ENCODE measurements at regions of chr12 and their contacts with region 1.

Region 1: DNA sequence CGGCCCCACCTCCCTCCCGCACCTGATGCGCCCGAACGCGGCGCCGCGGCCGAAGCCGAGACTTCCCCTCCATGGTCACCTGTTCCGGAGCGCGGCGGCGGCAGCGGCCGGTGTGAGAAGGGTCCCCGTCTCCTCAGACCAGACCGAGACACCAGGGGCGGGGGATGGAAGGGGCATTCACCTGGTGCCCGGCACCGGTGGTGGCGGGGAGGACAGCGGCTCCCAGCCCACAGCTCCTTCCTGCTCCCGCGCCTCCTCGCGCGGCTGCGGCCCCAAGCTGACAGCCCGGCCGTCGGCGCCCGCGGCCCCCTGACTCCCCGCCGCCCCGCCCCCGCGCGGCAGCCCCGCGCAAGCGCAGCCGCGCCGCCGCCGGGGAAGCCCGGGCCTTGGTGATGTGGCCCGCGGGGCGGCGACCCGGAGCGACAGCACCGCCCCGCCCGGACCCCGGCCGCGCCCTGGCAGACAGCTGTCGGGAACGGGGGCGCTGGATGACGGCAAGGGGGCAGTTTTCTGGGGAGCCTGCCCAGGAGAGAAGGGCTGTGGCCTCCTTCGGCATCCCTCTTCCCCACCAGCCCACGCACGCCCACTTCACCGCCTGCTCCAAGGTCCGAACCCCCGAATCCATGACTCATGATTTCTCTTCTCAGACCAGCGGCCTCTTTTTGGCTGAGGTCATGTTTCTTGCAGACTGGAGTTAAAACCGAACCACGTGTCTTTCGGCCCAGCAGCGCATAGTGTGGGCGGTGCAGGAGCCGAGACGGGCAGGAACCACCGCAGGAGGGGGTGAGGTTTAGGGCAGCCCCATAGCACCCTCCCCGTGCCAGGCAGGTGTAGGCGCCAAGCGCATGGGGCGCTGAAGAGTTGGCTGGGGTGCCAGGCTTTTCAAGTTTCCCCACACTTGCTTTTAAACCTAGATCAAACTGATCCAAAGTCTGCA is at the start of gene SLC41A2:
- DNase-seq: peak; percentile 91
- ATAC-seq: peak; percentile 84
- H3K4me3 ChIP-seq: peak within 1 kb of the TSS; percentile 57 to 80 (median 75)
- H3K4me3 Mint-ChIP-seq: peak within 1 kb of the TSS; percentile 95
- H3K27ac ChIP-seq: peak within 1 kb of the TSS; percentile 79 to 80
- H3K27ac Mint-ChIP-seq: peak within 1 kb of the TSS; percentile 93
- H3K4me1 ChIP-seq: peaks cover 13 to 16% of the 10 kb centered on the region in 2 donors
- H3K4me1 Mint-ChIP-seq: peaks cover 23% of the 10 kb centered on the region
- H3K27me3 ChIP-seq: peaks cover 0 to 2% (median 0%) of the 10 kb centered on the region in 4 experiments
- H3K27me3 Mint-ChIP-seq: peaks cover 6% of the 10 kb centered on the region
- CTCF ChIP-seq: peak; percentile 48
- total RNA-seq, gene SLC41A2: 13.0 TPM in 2 replicates

Region 2: DNA sequence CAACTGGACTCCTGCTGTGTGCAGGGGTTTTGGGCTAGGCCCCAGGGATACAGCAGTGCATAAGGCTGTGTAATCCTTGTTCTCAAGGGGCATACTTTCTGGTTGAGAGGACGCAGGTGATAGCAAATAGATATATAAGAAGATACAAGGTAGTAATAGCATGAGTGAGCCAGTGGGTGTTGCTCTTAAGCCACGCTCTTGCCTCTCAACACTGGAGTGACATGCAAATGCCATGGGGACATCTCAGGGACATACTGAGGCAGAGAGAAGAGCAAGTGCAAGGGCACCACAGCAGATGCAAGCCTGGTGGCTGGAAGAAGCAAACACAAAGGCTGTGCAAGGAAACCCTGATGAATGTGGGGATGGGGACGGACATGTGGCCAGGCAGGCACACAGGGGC is 278.2 kb before region 1 on chr12:
- CTCF ChIA-PET with region 1: interaction called, 5 read pairs
- POLR2A ChIA-PET with region 1: no interaction called
- intact Hi-C with region 1: loop called (anchors 10 kb)
- DNase-seq: peak; percentile 57
- ATAC-seq: peak; percentile 64
- H3K4me3 ChIP-seq: no peak overlapping the region
- H3K4me3 Mint-ChIP-seq: no peak overlapping the region
- H3K27ac ChIP-seq: peak overlapping the region in 1 of 2 donors; percentile 4
- H3K27ac Mint-ChIP-seq: peak overlapping the region; percentile 79
- H3K4me1 ChIP-seq: peaks cover 46 to 55% of the 10 kb centered on the region in 2 donors
- H3K4me1 Mint-ChIP-seq: peaks cover 79% of the 10 kb centered on the region
- H3K27me3 ChIP-seq: no peaks in the 10 kb centered on the region
- H3K27me3 Mint-ChIP-seq: no peaks in the 10 kb centered on the region
- CTCF ChIP-seq: peak; percentile 15

Region 3: DNA sequence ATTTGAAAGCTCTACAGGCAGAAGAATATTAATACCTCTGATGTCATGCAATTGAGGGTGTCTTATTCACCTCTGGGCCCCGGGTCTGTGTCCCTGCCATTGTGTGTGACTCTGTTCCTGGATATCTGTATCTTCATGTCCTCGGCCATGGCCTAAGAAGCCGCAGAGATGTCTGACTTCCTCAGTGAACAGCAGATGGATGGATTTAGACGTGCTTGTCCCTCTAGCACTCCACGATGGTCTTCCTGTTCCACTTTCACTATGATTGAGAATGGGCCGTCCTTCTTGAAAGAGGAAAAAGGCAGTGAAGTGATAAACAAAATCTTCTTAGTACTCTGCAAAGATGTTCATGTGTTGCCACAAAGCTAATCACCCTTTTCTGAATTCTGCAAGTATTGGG is 217.6 kb before region 1 on chr12:
- CTCF ChIA-PET with region 1: no interaction called
- POLR2A ChIA-PET with region 1: no interaction called
- intact Hi-C with region 1: loop called (anchors 1 kb)
- DNase-seq: peak; percentile 83
- ATAC-seq: peak; percentile 87
- H3K4me3 ChIP-seq: peak overlapping the region in 3 of 5 experiments; percentile 22 to 34 (median 33)
- H3K4me3 Mint-ChIP-seq: peak overlapping the region; percentile 74
- H3K27ac ChIP-seq: peak overlapping the region; percentile 66 to 83
- H3K27ac Mint-ChIP-seq: peak overlapping the region; percentile 93
- H3K4me1 ChIP-seq: peaks cover 77 to 88% of the 10 kb centered on the region in 2 donors
- H3K4me1 Mint-ChIP-seq: peaks cover 94% of the 10 kb centered on the region
- H3K27me3 ChIP-seq: no peaks in the 10 kb centered on the region
- H3K27me3 Mint-ChIP-seq: no peaks in the 10 kb centered on the region
- CTCF ChIP-seq: no peak

Region 4: GRCh38 chr12:104805186-104805585 is 153.1 kb before region 1 on chr12:
- CTCF ChIA-PET with region 1: no interaction called
- POLR2A ChIA-PET with region 1: no interaction called
- intact Hi-C with region 1: no loop called
- DNase-seq: no peak
- ATAC-seq: no peak
- H3K4me3 ChIP-seq: no peak overlapping the region
- H3K4me3 Mint-ChIP-seq: no peak overlapping the region
- H3K27ac ChIP-seq: no peak overlapping the region
- H3K27ac Mint-ChIP-seq: no peak overlapping the region
- H3K4me1 ChIP-seq: peaks cover 6 to 7% of the 10 kb centered on the region in 2 donors
- H3K4me1 Mint-ChIP-seq: peaks cover 11% of the 10 kb centered on the region
- H3K27me3 ChIP-seq: no peaks in the 10 kb centered on the region
- H3K27me3 Mint-ChIP-seq: no peaks in the 10 kb centered on the region
- CTCF ChIP-seq: no peak

Region 5: DNA sequence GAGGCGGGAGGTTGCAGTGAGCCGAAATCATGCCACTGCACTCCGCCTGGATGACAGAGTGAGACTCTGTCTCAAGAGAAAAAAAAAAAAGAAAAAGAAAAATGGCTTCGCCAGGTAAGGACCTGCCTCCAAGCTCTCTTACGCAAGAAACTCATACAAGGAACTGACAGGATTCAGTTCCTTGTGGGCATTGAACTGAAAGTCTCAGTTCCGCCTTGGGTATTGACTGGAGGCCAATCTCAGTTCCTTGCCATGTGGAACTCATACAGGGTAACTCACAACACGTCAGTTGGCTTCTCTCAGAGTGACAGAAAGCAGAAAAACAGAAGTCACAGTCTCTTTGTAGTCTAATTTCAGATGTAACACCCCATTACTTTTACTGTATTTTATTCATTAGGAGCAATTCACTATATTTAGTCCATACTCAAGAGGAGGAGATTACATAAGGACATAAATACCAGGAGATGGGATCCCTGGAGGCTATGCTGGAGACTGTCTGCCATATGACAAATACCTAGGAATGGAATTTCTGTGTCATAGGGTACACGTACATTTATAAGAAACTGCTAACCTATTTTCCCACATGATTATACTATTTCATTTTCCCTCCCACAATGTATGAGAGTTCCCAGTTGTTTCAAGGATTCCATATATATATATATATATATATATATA is 16.5 kb after region 1 on chr12:
- CTCF ChIA-PET with region 1: interaction called, 7 read pairs
- POLR2A ChIA-PET with region 1: interaction called, 6 read pairs
- intact Hi-C with region 1: loop called (anchors 1 kb)
- DNase-seq: peak; percentile 92
- ATAC-seq: peak; percentile 99
- H3K4me3 ChIP-seq: peak overlapping the region in 1 of 5 experiments; percentile 7
- H3K4me3 Mint-ChIP-seq: peak overlapping the region; percentile 69
- H3K27ac ChIP-seq: peak overlapping the region; percentile 71 to 76
- H3K27ac Mint-ChIP-seq: peak overlapping the region; percentile 76
- H3K4me1 ChIP-seq: peaks cover 24 to 32% of the 10 kb centered on the region in 2 donors
- H3K4me1 Mint-ChIP-seq: peaks cover 30% of the 10 kb centered on the region
- H3K27me3 ChIP-seq: no peaks in the 10 kb centered on the region
- H3K27me3 Mint-ChIP-seq: no peaks in the 10 kb centered on the region
- CTCF ChIP-seq: no peak

Region 6: GRCh38 chr12:104986022-104986941 is 28.0 kb after region 1 on chr12 and contains the start of gene NOPCHAP1:
- CTCF ChIA-PET with region 1: interaction called, 3 read pairs
- POLR2A ChIA-PET with region 1: no interaction called
- intact Hi-C with region 1: loop called (anchors 1 kb)
- DNase-seq: peak; percentile 86
- ATAC-seq: peak; percentile 99
- H3K4me3 ChIP-seq: peak within 1 kb of the TSS; percentile 57 to 93 (median 78)
- H3K4me3 Mint-ChIP-seq: peak within 1 kb of the TSS; percentile 87
- H3K27ac ChIP-seq: peak within 1 kb of the TSS; percentile 14 to 60
- H3K27ac Mint-ChIP-seq: peak within 1 kb of the TSS; percentile 68
- H3K4me1 ChIP-seq: peaks cover 17 to 18% of the 10 kb centered on the region in 2 donors
- H3K4me1 Mint-ChIP-seq: peaks cover 27% of the 10 kb centered on the region
- H3K27me3 ChIP-seq: no peaks in the 10 kb centered on the region
- H3K27me3 Mint-ChIP-seq: no peaks in the 10 kb centered on the region
- CTCF ChIP-seq: no peak
- total RNA-seq, gene NOPCHAP1: 15.3 and 21.2 TPM in 2 replicates